B cell (primary cell): ENCODE measurements at regions of chr5 and their contacts with region 1.

Region 1: DNA sequence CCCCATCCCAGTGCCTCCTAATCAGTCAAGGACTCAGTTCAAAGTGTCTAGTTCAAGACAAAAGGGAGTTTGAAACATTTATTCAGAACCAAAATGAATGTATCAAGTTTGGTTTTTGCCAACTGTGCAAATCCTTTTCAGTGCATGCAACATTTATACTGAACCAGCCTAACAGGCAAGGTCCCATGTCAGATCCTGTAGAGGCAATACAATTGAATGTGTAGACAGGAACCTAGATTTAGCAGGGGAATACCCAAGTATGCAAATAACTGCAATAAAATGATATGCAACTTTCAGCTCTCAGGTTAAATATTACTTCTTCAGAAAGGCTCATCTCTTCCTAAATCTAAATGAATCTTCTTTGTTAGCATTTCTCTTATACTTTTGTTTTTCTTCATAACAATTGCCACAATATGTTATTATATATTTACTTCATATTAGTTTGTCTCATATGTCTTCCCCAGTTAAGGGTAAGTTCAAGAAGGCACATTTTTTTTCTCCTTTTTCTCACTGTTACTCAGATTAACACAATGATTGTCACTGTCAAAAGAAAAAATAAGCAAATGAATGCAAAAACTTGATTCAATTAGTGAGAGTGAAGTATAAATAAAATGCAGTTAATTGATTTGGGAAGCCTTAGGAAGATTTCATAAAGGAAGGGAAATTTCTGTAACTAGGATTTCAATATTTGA is 163.9 kb upstream of the RASA1 start:
- DNase-seq: peak; percentile 63
- ATAC-seq: peak; percentile 93
- H3K4me3 ChIP-seq: peak overlapping the region in 1 of 5 experiments; percentile 27
- H3K4me3 Mint-ChIP-seq: peak overlapping the region; percentile 79
- H3K27ac ChIP-seq: peak overlapping the region in 1 of 2 donors; percentile 20
- H3K27ac Mint-ChIP-seq: peak overlapping the region; percentile 79
- H3K4me1 ChIP-seq: peaks cover 34 to 43% of the 10 kb centered on the region in 2 donors
- H3K4me1 Mint-ChIP-seq: peaks cover 45% of the 10 kb centered on the region
- H3K27me3 ChIP-seq: no peaks in the 10 kb centered on the region
- H3K27me3 Mint-ChIP-seq: no peaks in the 10 kb centered on the region
- CTCF ChIP-seq: no peak

Region 2: GRCh38 chr5:87081511-87082372 is 22.0 kb before region 1 on chr5:
- CTCF ChIA-PET with region 1: no interaction called
- POLR2A ChIA-PET with region 1: no interaction called
- intact Hi-C with region 1: loop called (anchors 1 kb)
- DNase-seq: peak; percentile 76
- ATAC-seq: peak; percentile 90
- H3K4me3 ChIP-seq: peak overlapping the region in 4 of 5 experiments; percentile 1 to 43 (median 17)
- H3K4me3 Mint-ChIP-seq: peak overlapping the region; percentile 75
- H3K27ac ChIP-seq: peak overlapping the region; percentile 68 to 69
- H3K27ac Mint-ChIP-seq: peak overlapping the region; percentile 89
- H3K4me1 ChIP-seq: peaks cover 37 to 53% of the 10 kb centered on the region in 2 donors
- H3K4me1 Mint-ChIP-seq: peaks cover 53% of the 10 kb centered on the region
- H3K27me3 ChIP-seq: no peaks in the 10 kb centered on the region
- H3K27me3 Mint-ChIP-seq: no peaks in the 10 kb centered on the region
- CTCF ChIP-seq: no peak